Sigmoid colon (tissue), 7 donors: ENCODE measurements at regions of chr20 and their contacts with region 1.

Region 1: GRCh38 chr20:3932681-3933080 is 43.5 kb downstream of the PANK2 start:
- DNase-seq: no peak
- H3K4me3 ChIP-seq: peak overlapping the region; percentile 26 to 51 (median 46)
- H3K27ac ChIP-seq: peak overlapping the region; percentile 67 to 74 (median 70)
- H3K4me1 ChIP-seq: peaks cover 0 to 46% (median 42%) of the 10 kb centered on the region in 4 donors
- H3K27me3 ChIP-seq: no peaks in the 10 kb centered on the region
- CTCF ChIP-seq: no peak
- EP300 ChIP-seq: no peak
- POLR2A ChIP-seq: no peak

Region 2: GRCh38 chr20:4014031-4014474 is 81.4 kb after region 1 on chr20:
- intact Hi-C with region 1: loop called (anchors 5 kb)
- DNase-seq: no peak
- H3K4me3 ChIP-seq: peak overlapping the region in 2 of 4 donors; percentile 68 to 90
- H3K27ac ChIP-seq: peak overlapping the region; percentile 8 to 86 (median 82)
- H3K4me1 ChIP-seq: peaks cover 0 to 21% (median 18%) of the 10 kb centered on the region in 4 donors
- H3K27me3 ChIP-seq: no peaks in the 10 kb centered on the region
- CTCF ChIP-seq: peak in 3 of 4 experiments; percentile 30 to 52 (median 36)
- EP300 ChIP-seq: no peak
- POLR2A ChIP-seq: no peak